ENCODE measurements at regions of chr16 and their contacts with region 1.

Region 1: DNA sequence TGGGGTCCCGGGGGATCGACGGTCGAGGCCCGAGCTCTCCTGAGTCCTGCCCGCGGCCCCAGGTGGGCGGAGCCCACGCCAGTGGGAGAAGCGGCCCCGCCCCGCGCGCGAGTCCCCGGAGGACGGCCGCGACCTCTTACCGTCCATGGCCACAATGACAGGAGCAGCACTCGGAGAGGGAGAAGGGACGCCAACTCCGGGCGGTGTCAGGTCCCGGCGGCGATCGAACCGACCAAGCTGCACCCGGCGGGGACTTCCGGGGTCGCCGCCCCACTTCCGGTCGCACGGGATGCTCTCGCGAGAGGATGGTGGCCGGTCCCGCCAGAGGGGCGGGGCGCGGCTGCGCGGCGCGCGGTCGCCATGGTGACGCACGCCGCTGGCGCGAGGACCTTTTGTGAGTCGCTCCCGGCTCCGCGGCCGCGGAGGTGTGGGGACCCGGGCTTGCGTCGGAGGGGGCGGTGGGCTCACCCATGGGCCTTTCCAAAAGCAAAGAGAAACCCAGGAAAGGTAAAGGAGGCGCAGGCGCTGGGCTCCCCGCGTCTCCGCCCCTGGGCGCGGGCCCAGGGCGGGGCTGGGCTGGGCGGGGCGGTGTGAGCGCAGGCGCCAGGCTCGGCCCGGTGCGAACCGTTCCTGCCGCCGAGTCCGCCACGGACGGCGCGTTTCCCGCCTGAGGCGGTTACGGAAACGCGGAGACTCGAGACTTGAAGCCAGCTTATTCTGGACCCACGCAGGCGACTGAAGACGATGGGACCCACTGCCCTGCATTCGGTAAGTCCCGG is at the starts of genes CHMP1A and SPATA33:
- DNase-seq: peak; percentile 96
- ATAC-seq: peak; percentile 93
- H3K4me3 Mint-ChIP-seq: peak within 1 kb of the TSS; percentile 90
- H3K27ac Mint-ChIP-seq: peak within 1 kb of the TSS; percentile 83
- H3K4me1 Mint-ChIP-seq: peaks cover 28% of the 10 kb centered on the region
- H3K27me3 Mint-ChIP-seq: no peaks in the 10 kb centered on the region
- total RNA-seq, gene CHMP1A: 37.9 to 67.3 TPM
- total RNA-seq, gene SPATA33: 6.8 to 11.6 TPM

Region 2: DNA sequence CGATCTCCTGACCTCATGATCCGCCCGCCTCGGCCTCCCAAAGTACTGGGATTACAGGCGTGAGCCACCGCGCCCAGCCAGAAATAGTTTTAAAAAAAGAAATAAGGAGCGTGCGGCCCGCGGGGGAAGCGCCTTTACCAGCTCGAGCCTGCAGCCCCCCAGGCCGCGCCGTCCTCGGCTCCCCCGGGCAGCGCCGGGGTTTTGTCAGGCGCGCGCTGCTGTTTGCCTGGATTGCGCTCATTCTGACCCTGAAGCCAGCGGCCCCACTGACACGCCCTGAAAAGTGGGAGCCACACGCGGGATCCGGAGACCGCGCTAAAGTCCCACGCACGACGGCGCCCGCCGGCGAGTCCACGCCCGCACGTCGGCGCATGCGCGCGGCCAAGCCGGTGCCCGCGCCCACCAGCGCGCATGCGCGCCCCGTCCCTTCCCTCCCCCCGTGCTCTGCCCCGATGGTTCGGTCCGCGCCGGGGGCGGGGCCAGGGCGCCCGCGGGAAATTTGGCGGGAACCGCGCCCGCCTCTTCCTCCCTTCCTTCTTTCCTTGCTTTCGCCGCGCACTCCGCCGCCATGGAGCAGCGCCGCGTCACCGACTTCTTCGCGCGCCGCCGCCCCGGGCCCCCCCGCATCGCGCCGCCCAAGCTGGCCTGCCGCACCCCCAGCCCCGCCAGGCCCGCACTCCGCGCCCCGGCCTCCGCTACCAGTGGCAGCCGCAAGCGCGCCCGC is 854.2 kb before region 1 on chr16 and contains the start of gene CDT1:
- CTCF ChIA-PET with region 1: no interaction called
- POLR2A ChIA-PET with region 1: no interaction called
- intact Hi-C with region 1: loop called in 1 of 2 experiments (anchors 2 kb)
- DNase-seq: peak; percentile 90
- ATAC-seq: peak; percentile 32
- H3K4me3 Mint-ChIP-seq: peak within 1 kb of the TSS; percentile 83
- H3K27ac Mint-ChIP-seq: peak within 1 kb of the TSS; percentile 94
- H3K4me1 Mint-ChIP-seq: peaks cover 24% of the 10 kb centered on the region
- H3K27me3 Mint-ChIP-seq: no peaks in the 10 kb centered on the region
- total RNA-seq, gene CDT1: 136 to 182 TPM

Region 3: DNA sequence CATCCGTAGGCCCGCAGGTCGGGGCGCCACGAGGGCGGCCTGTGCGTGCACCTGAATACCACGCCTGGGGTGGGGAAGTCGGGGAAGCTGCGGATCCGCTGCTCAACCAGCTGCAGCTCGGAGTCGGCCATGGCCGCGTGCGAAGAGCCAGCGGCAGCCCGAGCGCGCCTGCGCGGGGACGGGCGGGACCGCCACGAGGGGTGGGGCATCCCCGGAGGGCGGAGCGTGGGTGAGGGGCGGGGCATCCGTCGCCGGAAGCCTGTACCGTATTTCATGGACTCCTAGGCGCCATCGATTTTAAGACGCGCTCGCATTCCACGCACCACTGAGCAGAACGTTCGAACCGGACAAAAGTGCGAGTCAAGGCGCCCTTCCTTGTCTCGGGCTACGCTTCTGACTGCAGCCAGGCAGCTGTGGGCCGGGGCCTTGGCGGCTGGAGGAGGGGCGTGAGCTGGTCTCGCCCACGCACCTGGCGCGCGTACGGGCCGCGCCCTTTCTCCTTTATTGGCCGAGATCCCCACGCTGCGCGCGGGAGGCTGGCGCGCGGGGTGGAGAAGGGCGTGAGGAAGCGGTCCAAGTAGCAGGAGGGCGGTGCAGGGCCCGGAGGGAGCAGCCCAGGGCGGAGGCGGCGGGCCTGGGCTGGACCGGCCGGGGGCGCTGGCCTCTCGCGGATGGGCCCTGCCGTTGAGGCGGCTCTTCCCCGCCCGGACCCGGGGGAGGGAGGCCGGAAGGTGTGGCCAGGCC is 845.7 kb before region 1 on chr16 and contains the start of gene APRT:
- CTCF ChIA-PET with region 1: no interaction called
- POLR2A ChIA-PET with region 1: no interaction called
- intact Hi-C with region 1: loop called in 1 of 2 experiments (anchors 1 kb)
- DNase-seq: peak; percentile 99
- ATAC-seq: peak; percentile 76
- H3K4me3 Mint-ChIP-seq: peak within 1 kb of the TSS; percentile 86
- H3K27ac Mint-ChIP-seq: peak within 1 kb of the TSS; percentile 94
- H3K4me1 Mint-ChIP-seq: peaks cover 22% of the 10 kb centered on the region
- H3K27me3 Mint-ChIP-seq: no peaks in the 10 kb centered on the region
- total RNA-seq, gene APRT: 105 to 179 TPM

Region 4: DNA sequence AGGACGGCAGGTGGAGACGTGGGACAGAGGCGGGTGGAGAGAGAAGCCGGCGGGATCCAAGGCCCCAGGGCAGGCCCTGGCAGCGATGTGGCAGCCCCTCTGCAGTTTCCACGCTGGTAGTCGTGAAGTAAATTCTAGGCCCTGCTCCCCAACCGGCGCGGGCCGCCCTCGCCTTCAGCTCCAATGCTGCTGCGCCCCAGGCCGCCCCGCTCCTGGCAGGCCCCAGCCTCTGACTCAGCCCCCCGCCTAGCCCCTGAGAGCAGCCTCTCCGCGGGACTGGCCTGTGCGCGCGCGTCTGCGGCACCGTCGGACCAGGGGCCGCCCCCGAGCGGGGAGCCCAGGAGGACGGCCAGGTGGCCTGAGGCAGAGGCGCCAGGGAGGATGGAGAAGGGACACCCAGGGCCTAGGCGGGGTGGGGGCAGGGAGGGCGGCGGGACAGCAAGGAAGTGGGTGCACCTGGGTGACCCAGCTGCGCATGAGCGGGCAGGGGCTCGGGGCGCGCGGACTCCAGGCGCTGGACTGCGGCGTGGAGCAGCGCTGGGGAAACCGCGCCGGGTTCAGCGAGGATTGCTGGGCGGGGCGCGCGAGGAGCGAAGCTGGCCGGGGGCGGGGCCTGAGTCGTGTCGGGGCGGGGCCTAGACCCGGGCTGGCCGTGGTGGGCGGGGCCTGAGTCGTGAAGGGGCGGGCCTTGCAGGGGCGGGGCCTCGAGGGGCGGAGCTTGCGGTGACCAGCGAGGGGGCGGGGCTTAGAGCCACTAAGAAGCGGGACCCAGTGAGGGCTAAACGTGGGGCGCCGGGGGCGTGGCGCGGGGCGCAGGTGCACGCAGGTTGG is 410.5 kb before region 1 on chr16:
- CTCF ChIA-PET with region 1: no interaction called
- POLR2A ChIA-PET with region 1: no interaction called
- intact Hi-C with region 1: loop called in 1 of 2 experiments (anchors 1 kb)
- DNase-seq: peak; percentile 99
- ATAC-seq: peak; percentile 93
- H3K4me3 Mint-ChIP-seq: peak overlapping the region; percentile 71
- H3K27ac Mint-ChIP-seq: no peak overlapping the region
- H3K4me1 Mint-ChIP-seq: peaks cover 15% of the 10 kb centered on the region
- H3K27me3 Mint-ChIP-seq: no peaks in the 10 kb centered on the region

Region 5: GRCh38 chr16:89507834-89508590 is 149.6 kb before region 1 on chr16 and contains the start of gene SPG7:
- CTCF ChIA-PET with region 1: no interaction called
- POLR2A ChIA-PET with region 1: no interaction called
- intact Hi-C with region 1: no loop called
- DNase-seq: peak; percentile 94
- ATAC-seq: peak; percentile 74
- H3K4me3 Mint-ChIP-seq: peak within 1 kb of the TSS; percentile 90
- H3K27ac Mint-ChIP-seq: peak within 1 kb of the TSS; percentile 97
- H3K4me1 Mint-ChIP-seq: peaks cover 31% of the 10 kb centered on the region
- H3K27me3 Mint-ChIP-seq: no peaks in the 10 kb centered on the region
- total RNA-seq, gene SPG7: 68.6 to 76.7 TPM

Region 6: GRCh38 chr16:89560378-89561141 is 97.1 kb before region 1 on chr16 and contains the start of gene RPL13:
- CTCF ChIA-PET with region 1: interaction called, 3 read pairs
- POLR2A ChIA-PET with region 1: interaction called, 3 read pairs
- intact Hi-C with region 1: loop called in 1 of 2 experiments (anchors 1 kb)
- DNase-seq: peak; percentile 97
- ATAC-seq: peak; percentile 90
- H3K4me3 Mint-ChIP-seq: peak within 1 kb of the TSS; percentile 95
- H3K27ac Mint-ChIP-seq: peak within 1 kb of the TSS; percentile 99
- H3K4me1 Mint-ChIP-seq: peaks cover 46% of the 10 kb centered on the region
- H3K27me3 Mint-ChIP-seq: no peaks in the 10 kb centered on the region
- total RNA-seq, gene RPL13: 2,518 to 3,038 TPM

Region 7: GRCh38 chr16:89686520-89687091 is 29.0 kb after region 1 on chr16 and contains the start of gene CDK10:
- CTCF ChIA-PET with region 1: no interaction called
- POLR2A ChIA-PET with region 1: no interaction called
- intact Hi-C with region 1: loop called in 1 of 2 experiments (anchors 1 kb)
- DNase-seq: peak; percentile 92
- ATAC-seq: peak; percentile 90
- H3K4me3 Mint-ChIP-seq: peak within 1 kb of the TSS; percentile 86
- H3K27ac Mint-ChIP-seq: peak within 1 kb of the TSS; percentile 88
- H3K4me1 Mint-ChIP-seq: peaks cover 14% of the 10 kb centered on the region
- H3K27me3 Mint-ChIP-seq: no peaks in the 10 kb centered on the region
- total RNA-seq, gene CDK10: 78.1 to 89.8 TPM

Region 8: DNA sequence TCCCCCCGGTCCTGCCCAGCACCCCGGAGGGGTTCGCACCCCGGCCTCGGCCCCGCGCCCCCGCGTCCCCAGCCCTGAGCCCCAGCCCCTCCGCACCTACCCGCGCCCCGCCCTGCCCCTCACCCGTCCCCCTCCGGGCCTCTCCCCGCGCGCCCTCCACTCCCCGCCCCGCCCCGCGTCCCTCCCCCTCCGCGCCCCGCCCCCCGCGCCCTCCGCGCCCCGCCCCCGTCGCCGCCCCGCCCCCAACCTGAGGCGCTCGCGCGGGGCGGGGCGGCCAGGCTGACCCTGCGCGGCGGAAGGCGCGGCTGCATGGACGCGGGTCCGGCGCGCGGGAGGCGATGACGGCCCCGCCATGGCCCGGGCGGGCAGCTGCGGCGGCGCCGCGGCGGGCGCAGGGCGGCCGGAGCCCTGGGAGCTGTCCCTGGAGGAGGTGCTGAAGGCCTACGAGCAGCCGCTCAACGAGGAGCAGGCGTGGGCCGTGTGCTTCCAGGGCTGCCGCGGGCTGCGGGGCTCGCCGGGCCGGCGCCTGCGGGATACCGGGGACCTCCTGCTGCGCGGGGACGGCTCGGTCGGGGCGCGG is 170.7 kb after region 1 on chr16 and contains the start of gene SPIRE2:
- CTCF ChIA-PET with region 1: no interaction called
- POLR2A ChIA-PET with region 1: no interaction called
- intact Hi-C with region 1: no loop called
- DNase-seq: peak; percentile 85
- ATAC-seq: peak; percentile 89
- H3K4me3 Mint-ChIP-seq: peak within 1 kb of the TSS; percentile 52
- H3K27ac Mint-ChIP-seq: no peak within 1 kb of the TSS
- H3K4me1 Mint-ChIP-seq: no peaks in the 10 kb centered on the region
- H3K27me3 Mint-ChIP-seq: peaks cover 13% of the 10 kb centered on the region
- total RNA-seq, gene SPIRE2: 1.1 to 1.5 TPM

Region 9: DNA sequence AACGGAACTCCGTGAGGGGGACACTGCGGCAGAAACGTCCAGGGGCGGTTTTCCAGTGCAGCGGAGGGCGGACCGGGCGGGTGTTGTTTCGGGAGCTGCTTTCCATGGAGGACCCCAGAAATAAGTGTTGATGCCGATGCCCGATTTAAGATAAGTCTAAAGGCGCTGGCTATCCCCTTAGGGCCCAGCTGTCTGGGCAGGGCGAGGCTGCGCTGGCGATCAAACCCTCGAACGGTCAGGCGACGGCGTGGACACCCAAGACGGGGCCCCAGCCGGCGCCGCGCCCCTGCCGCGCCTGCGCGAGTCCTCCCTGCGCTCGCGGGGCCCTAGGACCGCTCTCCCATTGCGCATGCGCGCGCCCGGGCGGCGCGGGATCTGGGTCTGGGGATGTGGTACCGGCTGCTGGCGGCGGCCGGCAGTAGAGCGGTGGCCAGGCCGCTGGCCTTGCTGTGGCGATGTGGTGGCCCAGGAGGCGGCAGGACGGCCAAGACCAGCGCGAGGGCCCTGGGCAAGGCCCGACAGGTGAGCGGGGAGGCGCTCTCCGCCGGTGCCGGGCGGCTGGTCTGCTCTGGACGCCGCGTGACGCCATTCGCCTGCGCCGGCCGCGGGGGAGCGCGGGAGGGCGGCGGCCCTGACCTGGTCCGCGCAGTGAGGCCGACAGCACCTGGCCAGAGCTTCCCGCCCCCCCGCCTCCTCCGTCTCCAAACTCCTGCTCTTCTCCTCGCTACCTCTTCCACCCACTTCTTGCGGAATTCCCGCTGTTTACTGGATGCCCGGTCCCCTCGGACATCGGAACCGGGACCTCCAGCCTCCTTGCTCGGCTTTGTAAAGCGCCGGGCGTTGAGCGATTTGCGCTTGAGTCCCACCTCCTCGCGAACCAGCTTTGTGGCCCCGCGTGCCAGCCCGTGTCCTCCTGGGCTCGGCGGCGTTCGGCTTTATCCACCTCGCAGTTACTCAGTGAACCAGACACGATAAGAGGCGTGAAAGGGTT is 314.9 kb after region 1 on chr16:
- CTCF ChIA-PET with region 1: no interaction called
- POLR2A ChIA-PET with region 1: no interaction called
- intact Hi-C with region 1: loop called in 1 of 2 experiments (anchors 1 kb)
- DNase-seq: peak; percentile 94
- ATAC-seq: peak; percentile 94
- H3K4me3 Mint-ChIP-seq: peak overlapping the region; percentile 99
- H3K27ac Mint-ChIP-seq: peak overlapping the region; percentile 95
- H3K4me1 Mint-ChIP-seq: peaks cover 32% of the 10 kb centered on the region
- H3K27me3 Mint-ChIP-seq: no peaks in the 10 kb centered on the region